ENCODE measurements at regions of chr6 and their contacts with region 1.

Region 1: DNA sequence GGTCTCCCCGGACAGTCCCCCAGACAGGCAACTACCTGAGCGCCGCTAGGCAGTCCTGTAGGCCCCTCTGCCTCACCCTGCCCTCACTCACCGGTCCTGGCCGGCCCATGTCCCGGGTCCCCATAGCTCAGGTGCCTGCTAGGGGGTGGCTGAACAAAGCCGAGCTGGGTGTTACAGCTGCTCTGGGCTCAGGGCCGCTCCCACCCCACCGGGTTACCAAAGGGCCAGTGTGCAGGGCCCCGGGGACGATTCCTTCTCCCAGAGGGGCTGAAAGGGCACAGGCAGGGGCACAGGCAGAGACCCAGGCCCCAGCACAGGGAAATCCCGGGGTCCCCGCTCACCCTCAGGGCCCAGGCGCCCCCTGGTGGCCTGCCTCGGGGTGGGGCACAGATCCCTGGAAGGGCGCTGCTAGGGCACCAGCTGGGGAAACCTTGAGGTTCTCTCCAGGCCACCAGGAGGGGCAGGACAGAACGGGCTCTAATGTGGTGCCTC is 118.4 kb downstream of the GRM4 start:
- DNase-seq: peak; percentile 81
- ATAC-seq: peak; percentile 76
- H3K4me3 Mint-ChIP-seq: no peak overlapping the region
- H3K27ac Mint-ChIP-seq: no peak overlapping the region
- H3K4me1 Mint-ChIP-seq: no peaks in the 10 kb centered on the region
- H3K27me3 Mint-ChIP-seq: no peaks in the 10 kb centered on the region

Region 2: DNA sequence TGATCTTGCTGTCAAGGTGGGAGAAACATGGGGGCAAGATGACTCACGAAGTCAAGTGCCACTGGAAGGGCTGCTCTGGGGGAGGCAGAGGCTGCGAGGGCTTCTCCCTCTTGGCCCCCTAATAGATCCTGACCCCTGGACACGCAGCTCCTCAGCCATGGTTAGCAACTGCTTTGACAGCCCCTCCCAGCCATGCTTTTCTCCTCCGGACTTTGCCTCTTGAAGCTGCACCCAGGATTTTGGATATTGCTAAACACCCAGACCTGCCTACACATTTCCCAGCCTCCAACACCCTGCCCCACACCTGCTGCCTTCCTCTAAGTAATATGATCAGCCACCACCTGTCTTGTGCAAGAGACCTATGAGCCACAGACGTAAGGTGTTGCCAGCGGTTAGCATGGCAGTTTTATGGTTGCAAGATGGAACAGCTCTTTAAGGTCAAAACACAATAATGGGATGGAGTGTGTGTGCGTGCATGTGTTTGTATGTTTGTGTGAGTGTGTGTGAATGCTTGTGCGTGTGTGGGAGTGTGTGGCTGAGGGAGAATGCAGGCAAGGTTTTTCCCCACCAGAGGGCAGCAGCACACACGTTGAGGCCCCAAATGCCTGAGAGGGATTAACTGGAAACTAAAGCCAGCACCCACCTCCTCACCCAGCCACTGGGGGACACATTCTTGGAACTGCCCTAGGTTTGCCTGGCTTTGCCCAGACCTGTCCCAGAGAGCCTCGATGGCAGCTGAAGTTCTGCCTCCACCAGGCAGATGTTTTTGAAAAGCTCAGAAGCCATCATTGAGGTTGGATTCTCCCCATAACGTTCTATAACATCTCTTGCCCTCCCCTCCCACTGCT is 283.3 kb before region 1 on chr6:
- CTCF ChIA-PET with region 1: interaction called, 29 read pairs
- POLR2A ChIA-PET with region 1: no interaction called
- intact Hi-C with region 1: loop called (anchors 1 kb)
- DNase-seq: peak; percentile 85
- ATAC-seq: peak; percentile 89
- H3K4me3 Mint-ChIP-seq: no peak overlapping the region
- H3K27ac Mint-ChIP-seq: no peak overlapping the region
- H3K4me1 Mint-ChIP-seq: no peaks in the 10 kb centered on the region
- H3K27me3 Mint-ChIP-seq: no peaks in the 10 kb centered on the region

Region 3: DNA sequence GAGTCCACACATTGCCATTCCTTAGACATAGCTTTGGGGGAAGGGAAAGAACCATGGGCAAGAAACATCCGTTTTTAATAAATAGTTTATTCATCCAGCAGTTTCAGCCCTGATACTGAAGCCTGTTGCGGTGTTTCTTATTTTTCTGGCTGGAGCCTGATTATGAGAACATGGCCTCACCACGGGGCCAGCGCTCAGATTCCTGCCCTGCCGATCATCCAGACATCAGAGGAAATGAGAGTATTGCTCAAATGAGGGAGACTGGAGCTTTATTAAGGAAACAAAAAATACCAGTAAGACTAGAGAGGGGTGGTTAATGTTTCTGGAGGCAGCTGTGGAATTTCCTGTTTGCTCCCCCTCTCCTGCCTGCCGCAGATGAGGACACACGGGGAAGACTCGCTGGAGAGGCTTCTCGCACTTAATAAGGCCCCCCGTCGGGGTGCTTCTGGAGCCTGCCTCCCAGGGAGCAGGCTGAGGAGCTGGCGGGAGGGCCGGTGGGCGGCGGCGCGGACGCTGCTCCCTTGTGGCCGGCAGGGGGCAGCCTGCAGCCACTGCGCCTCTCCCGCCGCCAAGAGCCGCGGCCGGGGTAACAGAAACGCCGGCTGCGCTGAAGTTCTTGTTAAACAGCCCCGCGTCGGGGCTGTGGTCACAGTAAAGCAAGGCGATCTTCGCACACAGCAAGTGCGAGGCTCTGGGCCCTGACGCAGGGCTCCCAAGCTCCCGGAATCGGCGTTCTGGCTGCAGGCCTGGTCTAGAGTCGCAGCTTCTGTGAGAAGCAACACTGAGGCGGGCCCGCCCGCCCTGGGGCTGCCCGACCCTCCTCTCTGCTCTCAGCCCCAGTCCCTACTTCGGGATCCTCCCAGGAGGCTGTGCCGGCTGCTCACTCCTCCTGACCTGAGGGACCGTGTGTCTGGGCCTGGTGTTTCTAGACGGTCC is 256.1 kb before region 1 on chr6:
- CTCF ChIA-PET with region 1: interaction called, 72 read pairs
- POLR2A ChIA-PET with region 1: no interaction called
- intact Hi-C with region 1: loop called (anchors 1 kb)
- DNase-seq: peak; percentile 82
- ATAC-seq: peak; percentile 76
- H3K4me3 Mint-ChIP-seq: no peak overlapping the region
- H3K27ac Mint-ChIP-seq: no peak overlapping the region
- H3K4me1 Mint-ChIP-seq: peaks cover 2% of the 10 kb centered on the region
- H3K27me3 Mint-ChIP-seq: no peaks in the 10 kb centered on the region

Region 4: GRCh38 chr6:33851959-33852358 is 175.5 kb before region 1 on chr6:
- CTCF ChIA-PET with region 1: no interaction called
- POLR2A ChIA-PET with region 1: no interaction called
- intact Hi-C with region 1: loop called (anchors 1 to 5 kb)
- DNase-seq: peak; percentile 39
- ATAC-seq: no peak
- H3K4me3 Mint-ChIP-seq: no peak overlapping the region
- H3K27ac Mint-ChIP-seq: no peak overlapping the region
- H3K4me1 Mint-ChIP-seq: peaks cover 14% of the 10 kb centered on the region
- H3K27me3 Mint-ChIP-seq: peaks cover 8% of the 10 kb centered on the region

Measured in activated CD4-positive, alpha-beta T cell treated with anti-CD3 and anti-CD28 coated beads for 36 hours (primary cell).